Gastrocnemius medialis (tissue), 4 donors: ENCODE measurements at regions of chr12 and their contacts with region 1.

Region 1: GRCh38 chr12:117025481-117026151 is 73.6 kb downstream of the TESC start:
- DNase-seq: peak in 1 of 2 donors; percentile 31
- ATAC-seq: peak in 1 of 2 donors; percentile 77
- H3K4me3 ChIP-seq: no peak overlapping the region
- H3K27ac ChIP-seq: peak overlapping the region in 1 of 4 donors; percentile 25
- H3K4me1 ChIP-seq: peaks cover 0 to 4% of the 10 kb centered on the region in 2 donors
- H3K27me3 ChIP-seq: no peaks in the 10 kb centered on the region
- CTCF ChIP-seq: peak; percentile 72 to 85 (median 83)
- POLR2A ChIP-seq: no peak

Region 2: GRCh38 chr12:116969615-116970580 is 55.7 kb before region 1 on chr12:
- in situ Hi-C with region 1: no loop called
- intact Hi-C with region 1: no loop called
- DNase-seq: peak in 1 of 2 donors; percentile 28
- ATAC-seq: no peak
- H3K4me3 ChIP-seq: no peak overlapping the region
- H3K27ac ChIP-seq: no peak overlapping the region
- H3K4me1 ChIP-seq: no peaks in the 10 kb centered on the region
- H3K27me3 ChIP-seq: no peaks in the 10 kb centered on the region
- CTCF ChIP-seq: no peak
- POLR2A ChIP-seq: no peak

Region 3: DNA sequence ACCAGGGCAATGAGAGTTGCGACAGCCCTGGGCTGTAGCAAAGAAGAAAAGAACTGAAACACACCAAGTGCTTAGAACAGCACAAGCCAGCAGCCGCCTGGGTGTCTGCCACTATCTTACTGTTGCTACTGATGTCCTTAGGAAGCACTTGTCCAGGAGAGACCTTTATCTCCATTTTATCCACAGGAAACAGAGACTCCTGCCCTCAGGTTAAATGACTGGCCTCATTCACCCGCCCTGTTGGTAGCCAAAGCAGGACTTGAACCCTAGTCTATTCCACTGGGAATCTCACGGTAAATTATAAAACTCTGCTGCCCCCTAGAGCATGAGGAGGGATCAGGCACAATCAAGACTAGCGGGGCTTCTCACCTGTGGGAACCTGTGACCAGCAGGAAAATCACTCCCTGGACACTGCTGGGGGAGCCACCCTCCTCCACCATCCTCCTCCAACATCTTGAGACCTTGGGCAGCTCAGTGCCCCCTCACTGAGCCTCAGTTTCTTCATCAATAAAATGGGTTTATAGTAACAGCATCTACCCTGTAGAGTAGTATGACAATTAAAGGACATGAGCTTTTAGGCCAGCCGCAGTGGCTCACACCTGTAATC is 94.1 kb after region 1 on chr12:
- in situ Hi-C with region 1: no loop called
- intact Hi-C with region 1: loop called (anchors 2 kb)
- DNase-seq: peak in 1 of 2 donors; percentile 25
- ATAC-seq: no peak
- H3K4me3 ChIP-seq: no peak overlapping the region
- H3K27ac ChIP-seq: peak overlapping the region in 1 of 4 donors; percentile 2
- H3K4me1 ChIP-seq: peaks cover 8 to 15% of the 10 kb centered on the region in 2 donors
- H3K27me3 ChIP-seq: no peaks in the 10 kb centered on the region
- CTCF ChIP-seq: peak in 4 of 5 experiments; percentile 33 to 59 (median 50)
- POLR2A ChIP-seq: no peak

Region 4: GRCh38 chr12:117143008-117143532 is 117.5 kb after region 1 on chr12:
- in situ Hi-C with region 1: loop called in 1 of 4 experiments (anchors 10 kb)
- intact Hi-C with region 1: no loop called
- DNase-seq: no peak
- ATAC-seq: no peak
- H3K4me3 ChIP-seq: no peak overlapping the region
- H3K27ac ChIP-seq: no peak overlapping the region
- H3K4me1 ChIP-seq: peaks cover 0 to 5% of the 10 kb centered on the region in 2 donors
- H3K27me3 ChIP-seq: no peaks in the 10 kb centered on the region
- CTCF ChIP-seq: no peak
- POLR2A ChIP-seq: no peak

Region 5: GRCh38 chr12:117155278-117156060 is 129.9 kb after region 1 on chr12:
- in situ Hi-C with region 1: no loop called
- intact Hi-C with region 1: loop called (anchors 10 kb)
- DNase-seq: peak in 1 of 2 donors; percentile 27
- ATAC-seq: no peak
- H3K4me3 ChIP-seq: no peak overlapping the region
- H3K27ac ChIP-seq: no peak overlapping the region
- H3K4me1 ChIP-seq: no peaks in the 10 kb centered on the region
- H3K27me3 ChIP-seq: no peaks in the 10 kb centered on the region
- CTCF ChIP-seq: peak in 4 of 5 experiments; percentile 42 to 76 (median 52)
- POLR2A ChIP-seq: no peak

Region 6: GRCh38 chr12:117277875-117278491 is 252.4 kb after region 1 on chr12:
- in situ Hi-C with region 1: no loop called
- intact Hi-C with region 1: no loop called
- DNase-seq: no peak
- ATAC-seq: no peak
- H3K4me3 ChIP-seq: no peak overlapping the region
- H3K27ac ChIP-seq: no peak overlapping the region
- H3K4me1 ChIP-seq: peaks cover 0 to 7% of the 10 kb centered on the region in 2 donors
- H3K27me3 ChIP-seq: no peaks in the 10 kb centered on the region
- CTCF ChIP-seq: no peak
- POLR2A ChIP-seq: no peak